ENCODE measurements at regions of chr18 and their contacts with region 1.

Region 1: DNA sequence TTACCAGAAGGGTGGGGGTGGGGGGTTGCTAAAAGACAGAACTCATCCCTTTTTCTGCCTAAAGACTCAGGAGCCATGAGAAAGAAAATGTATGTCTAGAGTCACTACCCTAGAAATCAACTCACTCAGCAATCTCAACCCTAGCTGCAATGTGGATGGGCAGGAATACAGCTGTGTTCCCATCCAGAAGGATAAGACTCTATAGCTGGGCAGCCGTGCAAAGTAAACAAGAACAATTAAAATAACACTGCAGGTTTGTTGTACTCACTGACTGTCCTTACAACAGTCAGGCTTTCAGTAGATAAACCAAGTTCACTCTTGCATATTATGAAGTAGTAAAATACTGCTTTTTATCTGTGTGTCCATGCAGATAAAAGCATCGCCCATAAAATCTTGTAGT is 74.0 kb downstream of the ESCO1 start:
- DNase-seq: no peak
- ATAC-seq: no peak
- H3K4me3 ChIP-seq: no peak overlapping the region
- H3K4me3 Mint-ChIP-seq: no peak overlapping the region
- H3K27ac ChIP-seq: no peak overlapping the region
- H3K27ac Mint-ChIP-seq: peak overlapping the region; percentile 27
- H3K4me1 ChIP-seq: no peaks in the 10 kb centered on the region
- H3K4me1 Mint-ChIP-seq: no peaks in the 10 kb centered on the region
- H3K27me3 ChIP-seq: no peaks in the 10 kb centered on the region
- H3K27me3 Mint-ChIP-seq: no peaks in the 10 kb centered on the region
- CTCF ChIP-seq: no peak

Region 2: DNA sequence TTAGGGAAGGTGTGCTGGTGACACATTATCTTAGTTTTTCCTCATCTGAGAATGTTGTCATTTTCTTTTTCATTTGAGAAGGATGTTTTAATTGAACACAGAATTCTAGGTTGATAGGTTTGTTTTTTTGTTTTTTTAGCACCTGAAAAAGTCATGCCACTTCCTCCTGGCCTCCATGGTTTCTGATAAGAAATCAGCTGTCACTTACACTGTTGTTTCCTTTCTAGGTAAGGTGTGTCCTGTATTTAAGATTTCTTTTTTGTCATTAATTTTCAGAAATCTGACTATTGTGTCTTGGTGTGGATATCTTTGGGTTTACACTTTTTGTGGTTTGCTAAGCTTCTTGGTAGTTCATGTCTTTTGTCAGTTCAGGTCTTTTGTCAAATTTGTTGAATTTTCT is 514.2 kb before region 1 on chr18:
- CTCF ChIA-PET with region 1: no interaction called
- POLR2A ChIA-PET with region 1: no interaction called
- intact Hi-C with region 1: no loop called
- DNase-seq: peak in 1 of 14 experiments; percentile 9
- ATAC-seq: no peak
- H3K4me3 ChIP-seq: no peak overlapping the region
- H3K4me3 Mint-ChIP-seq: no peak overlapping the region
- H3K27ac ChIP-seq: no peak overlapping the region
- H3K27ac Mint-ChIP-seq: no peak overlapping the region
- H3K4me1 ChIP-seq: no peaks in the 10 kb centered on the region
- H3K4me1 Mint-ChIP-seq: peaks cover 18% of the 10 kb centered on the region
- H3K27me3 ChIP-seq: no peaks in the 10 kb centered on the region
- H3K27me3 Mint-ChIP-seq: no peaks in the 10 kb centered on the region
- CTCF ChIP-seq: no peak

Region 3: DNA sequence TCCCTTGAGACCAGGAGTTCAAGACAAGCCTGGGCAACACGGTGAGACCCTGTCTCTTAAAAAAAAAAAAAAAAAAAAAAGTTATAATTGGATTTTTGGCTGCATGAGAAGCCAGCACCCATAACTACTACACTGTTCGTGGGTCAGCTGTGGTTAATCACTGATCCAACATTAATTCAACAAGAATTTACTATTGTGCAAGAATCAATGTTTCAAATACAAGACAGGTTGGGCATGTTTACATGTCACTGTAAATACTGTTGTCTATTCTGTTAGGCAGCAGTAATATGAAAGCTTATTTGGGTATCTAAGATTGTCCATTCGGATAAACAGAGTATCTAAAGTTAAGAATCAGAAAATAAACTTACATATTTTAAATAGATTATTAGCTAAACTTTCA is 11.8 kb after region 1 on chr18:
- CTCF ChIA-PET with region 1: interaction called, 3 read pairs
- POLR2A ChIA-PET with region 1: no interaction called
- intact Hi-C with region 1: loop called in 1 of 2 experiments (anchors 1 kb)
- DNase-seq: no peak
- ATAC-seq: no peak
- H3K4me3 ChIP-seq: no peak overlapping the region
- H3K4me3 Mint-ChIP-seq: no peak overlapping the region
- H3K27ac ChIP-seq: no peak overlapping the region
- H3K27ac Mint-ChIP-seq: no peak overlapping the region
- H3K4me1 ChIP-seq: no peaks in the 10 kb centered on the region
- H3K4me1 Mint-ChIP-seq: peaks cover 6% of the 10 kb centered on the region
- H3K27me3 ChIP-seq: no peaks in the 10 kb centered on the region
- H3K27me3 Mint-ChIP-seq: no peaks in the 10 kb centered on the region
- CTCF ChIP-seq: no peak

Measured in CD4-positive, alpha-beta T cell (primary cell).